ENCODE measurements at regions of chr22 and their contacts with region 1.

Region 1: GRCh38 chr22:25235547-25236290 is 16.3 kb downstream of the CRYBB2 start:
- DNase-seq: peak; percentile 56
- ATAC-seq: peak; percentile 89
- H3K4me3 Mint-ChIP-seq: no peak overlapping the region
- H3K27ac Mint-ChIP-seq: no peak overlapping the region
- H3K4me1 Mint-ChIP-seq: peaks cover 6% of the 10 kb centered on the region
- H3K27me3 Mint-ChIP-seq: peaks cover 29% of the 10 kb centered on the region
- CTCF ChIP-seq: no peak

Region 2: DNA sequence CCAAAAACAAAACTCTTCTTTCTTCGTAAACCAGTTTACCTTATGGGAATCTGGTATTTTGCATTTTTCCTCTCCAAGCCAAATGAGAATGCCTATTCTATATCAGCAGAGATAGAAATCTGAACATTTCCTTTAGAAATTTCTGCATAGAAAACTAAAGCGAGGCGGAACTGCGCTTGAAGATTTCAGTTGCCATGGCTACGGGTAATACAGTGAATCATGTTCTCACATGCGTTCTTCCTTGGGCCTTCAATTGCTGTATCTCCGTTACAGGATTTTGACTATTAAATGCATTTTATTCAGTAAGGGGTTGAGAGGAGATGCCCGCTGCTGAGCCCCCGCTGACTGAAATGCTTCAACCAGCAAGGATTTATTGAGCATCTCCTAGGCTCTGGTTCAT is 144.3 kb before region 1 on chr22:
- CTCF ChIA-PET with region 1: no interaction called
- POLR2A ChIA-PET with region 1: no interaction called
- intact Hi-C with region 1: no loop called
- DNase-seq: no peak
- ATAC-seq: no peak
- H3K4me3 Mint-ChIP-seq: no peak overlapping the region
- H3K27ac Mint-ChIP-seq: no peak overlapping the region
- H3K4me1 Mint-ChIP-seq: peaks cover 3% of the 10 kb centered on the region
- H3K27me3 Mint-ChIP-seq: peaks cover 13% of the 10 kb centered on the region
- CTCF ChIP-seq: no peak

Region 3: GRCh38 chr22:25282671-25283561 is 47.2 kb after region 1 on chr22:
- CTCF ChIA-PET with region 1: no interaction called
- POLR2A ChIA-PET with region 1: interaction called, 3 read pairs
- intact Hi-C with region 1: loop called (anchors 2 kb)
- DNase-seq: peak; percentile 18
- ATAC-seq: peak; percentile 58
- H3K4me3 Mint-ChIP-seq: peak overlapping the region; percentile 84
- H3K27ac Mint-ChIP-seq: peak overlapping the region; percentile 68
- H3K4me1 Mint-ChIP-seq: peaks cover 46% of the 10 kb centered on the region
- H3K27me3 Mint-ChIP-seq: peaks cover 36% of the 10 kb centered on the region
- CTCF ChIP-seq: no peak

Region 4: GRCh38 chr22:26330966-26331625 is 1095.4 kb after region 1 on chr22:
- CTCF ChIA-PET with region 1: no interaction called
- POLR2A ChIA-PET with region 1: no interaction called
- intact Hi-C with region 1: loop called (anchors 2 kb)
- DNase-seq: peak; percentile 20
- ATAC-seq: peak; percentile 70
- H3K4me3 Mint-ChIP-seq: no peak overlapping the region
- H3K27ac Mint-ChIP-seq: no peak overlapping the region
- H3K4me1 Mint-ChIP-seq: peaks cover 1% of the 10 kb centered on the region
- H3K27me3 Mint-ChIP-seq: peaks cover 16% of the 10 kb centered on the region
- CTCF ChIP-seq: no peak